Panc1 (cell line): ENCODE measurements at regions of chr22 and their contacts with region 1.

Region 1: DNA sequence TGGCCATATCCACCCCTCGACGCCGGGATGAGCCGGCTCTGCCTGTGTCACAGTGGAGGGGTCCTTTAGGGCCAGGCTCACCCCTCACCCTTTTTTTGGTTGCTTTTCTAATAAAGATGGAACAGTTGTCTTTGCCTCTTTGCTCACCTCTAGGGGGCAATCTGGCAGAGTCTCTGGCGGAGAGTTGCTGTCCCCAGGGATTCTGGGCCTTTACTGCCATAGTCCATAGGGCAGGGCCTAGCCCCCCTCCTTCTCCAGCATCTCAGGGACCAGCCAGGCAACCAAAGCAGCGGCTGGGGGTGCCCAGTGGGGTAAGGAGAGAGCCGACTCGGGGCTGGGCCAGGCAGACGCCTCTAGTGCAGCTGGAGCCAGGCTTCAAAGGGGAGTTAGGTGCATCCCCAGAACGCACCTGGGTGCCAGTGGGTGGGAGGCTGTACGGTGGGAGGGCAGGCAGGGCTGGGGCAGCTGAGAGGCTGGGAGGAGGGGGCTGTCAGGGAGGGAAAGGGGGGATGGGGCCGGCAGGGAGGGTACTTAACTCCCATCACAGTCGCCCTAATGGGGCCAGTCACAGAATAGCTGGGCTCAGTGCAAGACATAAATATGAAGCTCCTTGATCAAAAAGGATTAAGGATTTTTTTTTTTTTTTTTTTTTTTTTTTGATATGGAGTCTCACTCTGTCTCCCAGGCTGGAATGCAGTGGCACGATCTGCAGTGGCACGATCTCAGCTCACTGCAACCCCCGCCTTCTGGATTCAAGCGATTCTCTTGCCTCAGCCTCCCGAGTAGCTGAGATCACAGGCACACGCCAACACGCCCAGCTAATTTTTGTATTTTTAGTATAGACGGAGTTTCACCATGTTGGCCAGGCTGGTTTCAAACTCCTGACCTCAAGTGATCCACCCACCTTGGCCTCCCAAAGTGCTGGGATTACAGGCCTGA is 2.5 kb upstream of the SUSD2 start:
- DNase-seq: no peak
- ATAC-seq: no peak
- H3K4me3 ChIP-seq: no peak overlapping the region
- H3K27ac ChIP-seq: no peak overlapping the region
- H3K4me1 ChIP-seq: peaks cover 3% of the 10 kb centered on the region; the same call in 1 of the 2 replicates
- H3K27me3 ChIP-seq: no peaks in the 10 kb centered on the region
- CTCF ChIP-seq: peak; percentile 66

Region 2: GRCh38 chr22:24060375-24060788 is 118.4 kb before region 1 on chr22:
- CTCF ChIA-PET with region 1: interaction called, 12 read pairs
- POLR2A ChIA-PET with region 1: no interaction called
- in situ Hi-C with region 1: no loop called
- intact Hi-C with region 1: no loop called
- DNase-seq: no peak
- ATAC-seq: peak; percentile 86
- H3K4me3 ChIP-seq: no peak overlapping the region
- H3K27ac ChIP-seq: peak overlapping the region; percentile 39; the same call in 1 of the 2 replicates
- H3K4me1 ChIP-seq: no peaks in the 10 kb centered on the region; the same call in 1 of the 2 replicates
- H3K27me3 ChIP-seq: no peaks in the 10 kb centered on the region
- CTCF ChIP-seq: no peak

Region 3: DNA sequence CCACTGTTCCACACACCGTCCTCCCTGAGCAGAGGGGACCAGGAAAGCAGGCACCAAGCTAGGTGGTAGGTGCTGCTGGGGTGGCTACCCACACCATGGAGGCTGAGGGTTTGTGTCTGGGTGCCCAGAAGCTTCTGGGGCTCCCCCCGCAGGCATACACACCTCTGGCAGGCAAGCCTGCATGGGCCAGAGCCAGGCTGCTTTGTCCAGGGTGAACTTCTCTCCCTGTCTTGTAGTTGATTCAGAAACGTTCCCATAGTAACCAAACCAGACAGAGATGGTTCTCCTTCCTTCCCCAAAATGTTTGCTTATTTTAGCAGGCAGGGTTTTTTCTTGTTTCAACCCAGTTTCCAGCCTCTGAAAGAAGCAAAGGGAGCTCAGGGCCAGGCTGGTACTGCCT is 38.4 kb before region 1 on chr22:
- CTCF ChIA-PET with region 1: interaction called, 15 read pairs
- POLR2A ChIA-PET with region 1: no interaction called
- in situ Hi-C with region 1: no loop called
- intact Hi-C with region 1: no loop called
- DNase-seq: no peak
- ATAC-seq: no peak
- H3K4me3 ChIP-seq: no peak overlapping the region
- H3K27ac ChIP-seq: no peak overlapping the region
- H3K4me1 ChIP-seq: no peaks in the 10 kb centered on the region
- H3K27me3 ChIP-seq: no peaks in the 10 kb centered on the region
- CTCF ChIP-seq: no peak